ENCODE measurements at regions of chr6 and their contacts with region 1.

Region 1: DNA sequence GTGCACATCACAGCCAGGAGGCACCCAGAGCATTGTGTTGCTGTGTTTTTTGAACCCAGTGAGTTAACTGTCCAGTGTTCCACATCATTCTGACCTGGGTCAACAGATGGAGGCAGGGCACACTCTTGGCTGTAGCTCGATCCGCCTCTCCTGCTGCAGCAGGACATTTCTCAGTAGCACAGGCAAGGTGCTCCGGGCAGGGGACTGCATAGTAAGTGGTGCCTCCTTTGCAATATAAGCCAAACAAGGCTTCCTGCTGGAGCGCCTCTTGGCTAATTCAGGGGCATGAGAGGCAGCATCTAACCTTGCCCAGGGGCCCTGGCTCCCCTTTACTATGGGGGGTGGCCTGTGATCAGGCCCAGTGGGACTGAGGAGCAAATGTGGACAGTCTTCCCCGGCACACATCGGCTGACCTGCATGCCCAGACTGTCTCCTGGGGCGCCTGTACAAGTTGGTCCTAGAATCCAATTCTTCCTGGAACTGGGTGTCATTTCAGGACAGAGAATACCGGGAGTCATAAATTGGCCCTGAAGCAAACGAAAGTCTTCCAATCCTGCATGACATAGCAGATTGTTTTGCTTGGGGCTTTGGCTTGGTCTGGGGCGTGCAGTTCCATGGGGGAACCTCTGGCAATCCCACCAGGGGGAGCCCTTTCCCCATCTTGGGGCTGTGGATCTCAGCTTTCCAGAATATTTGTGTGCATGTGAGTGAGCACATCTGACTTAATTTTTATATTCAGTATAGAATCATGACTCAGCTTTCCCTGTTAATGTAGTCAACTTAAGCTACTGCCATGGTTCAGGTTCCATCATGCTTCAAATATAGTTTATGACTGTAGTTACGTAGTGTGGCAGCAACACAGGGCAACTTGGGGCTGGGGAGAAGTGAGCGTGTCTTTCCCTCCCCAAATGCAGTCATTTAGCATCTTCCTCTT is 56.0 kb upstream of the DDR1 start:
- DNase-seq: peak; percentile 90
- ATAC-seq: peak; percentile 98
- H3K4me3 ChIP-seq: no peak overlapping the region
- H3K27ac ChIP-seq: peak overlapping the region; percentile 58
- H3K4me1 ChIP-seq: peaks cover 16% of the 10 kb centered on the region
- H3K27me3 ChIP-seq: peaks cover 5% of the 10 kb centered on the region
- CTCF ChIP-seq: peak; percentile 99
- POLR2A ChIP-seq: peak; percentile 59
- RAD21 ChIP-seq: peak; percentile 99

Region 2: GRCh38 chr6:30678964-30679726 is 149.1 kb before region 1 on chr6:
- CTCF ChIA-PET with region 1: interaction called, 5 read pairs
- POLR2A ChIA-PET with region 1: no interaction called
- dilution Hi-C with region 1: no loop called
- in situ Hi-C with region 1: no loop called
- intact Hi-C with region 1: loop called (anchors 2 kb)
- DNase-seq: peak; percentile 73
- ATAC-seq: peak; percentile 36
- H3K4me3 ChIP-seq: no peak overlapping the region
- H3K27ac ChIP-seq: peak overlapping the region; percentile 49
- H3K4me1 ChIP-seq: peaks cover 14% of the 10 kb centered on the region
- H3K27me3 ChIP-seq: no peaks in the 10 kb centered on the region
- CTCF ChIP-seq: peak; percentile 93
- POLR2A ChIP-seq: no peak; the same call in 1 of the 2 replicates
- RAD21 ChIP-seq: peak; percentile 95

Region 3: GRCh38 chr6:30877419-30878371 is 49.4 kb after region 1 on chr6:
- CTCF ChIA-PET with region 1: interaction called, 7 read pairs
- POLR2A ChIA-PET with region 1: no interaction called
- dilution Hi-C with region 1: no loop called
- in situ Hi-C with region 1: no loop called
- intact Hi-C with region 1: loop called (anchors 1 kb)
- DNase-seq: peak; percentile 90
- ATAC-seq: peak; percentile 88
- H3K4me3 ChIP-seq: peak overlapping the region; percentile 23; the same call in 1 of the 2 replicates
- H3K27ac ChIP-seq: peak overlapping the region; percentile 77
- H3K4me1 ChIP-seq: peaks cover 14% of the 10 kb centered on the region
- H3K27me3 ChIP-seq: no peaks in the 10 kb centered on the region
- CTCF ChIP-seq: peak; percentile 97
- POLR2A ChIP-seq: no peak
- RAD21 ChIP-seq: peak; percentile 94

Region 4: DNA sequence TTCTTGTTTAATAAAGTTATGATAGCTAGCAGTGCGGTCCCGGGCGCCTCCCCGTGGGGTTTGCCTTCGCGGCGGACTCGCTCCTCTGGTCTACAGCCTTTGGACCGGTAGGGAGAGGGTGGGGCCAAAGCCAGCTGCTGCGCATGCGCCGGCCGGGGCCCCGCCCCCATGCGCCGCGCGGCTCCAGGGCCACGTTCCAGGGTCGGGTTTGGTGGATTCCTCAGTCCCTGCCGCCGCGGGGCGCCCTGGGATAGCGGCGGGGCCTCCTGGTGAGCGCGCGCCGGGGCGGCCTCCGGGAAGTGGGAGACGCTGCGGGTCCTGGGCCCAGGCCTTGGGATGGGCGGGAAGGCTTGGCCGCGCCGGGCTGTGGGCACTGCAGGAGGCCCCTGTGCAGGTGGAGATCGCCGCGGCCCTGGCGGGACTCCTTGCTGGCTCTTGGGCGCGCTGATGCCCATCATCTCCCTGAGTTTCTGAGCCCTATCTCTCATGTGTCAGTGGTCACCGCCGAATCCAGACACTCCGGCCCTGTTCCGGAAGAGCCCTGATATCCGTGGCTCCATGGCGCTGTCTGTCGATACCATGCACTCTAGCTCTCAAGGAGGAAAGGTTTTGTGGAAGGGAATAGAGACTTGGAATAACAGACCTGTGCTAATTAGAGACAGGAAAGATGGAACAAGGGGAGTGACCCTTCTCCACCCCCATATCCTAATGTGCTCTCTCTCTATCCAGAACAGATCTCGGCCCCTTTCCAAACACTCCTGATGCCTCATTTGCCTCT is 86.0 kb after region 1 on chr6 and contains the start of gene VARS2:
- CTCF ChIA-PET with region 1: interaction called, 3 read pairs
- POLR2A ChIA-PET with region 1: no interaction called
- dilution Hi-C with region 1: no loop called
- in situ Hi-C with region 1: no loop called
- intact Hi-C with region 1: loop called (anchors 1 kb)
- DNase-seq: peak; percentile 88
- ATAC-seq: peak; percentile 97
- H3K4me3 ChIP-seq: peak within 1 kb of the TSS; percentile 44
- H3K27ac ChIP-seq: peak within 1 kb of the TSS; percentile 82
- H3K4me1 ChIP-seq: peaks cover 12% of the 10 kb centered on the region
- H3K27me3 ChIP-seq: no peaks in the 10 kb centered on the region
- CTCF ChIP-seq: peak; percentile 54
- POLR2A ChIP-seq: peak; percentile 60; the same call in 1 of the 2 replicates
- RAD21 ChIP-seq: peak; percentile 50
- total RNA-seq, gene VARS2: 6.9 and 7.2 TPM in 2 replicates

Region 5: GRCh38 chr6:31079656-31080261 is 251.5 kb after region 1 on chr6:
- CTCF ChIA-PET with region 1: no interaction called
- POLR2A ChIA-PET with region 1: no interaction called
- dilution Hi-C with region 1: no loop called
- in situ Hi-C with region 1: loop called (anchors 5 kb)
- intact Hi-C with region 1: no loop called
- DNase-seq: peak; percentile 61
- ATAC-seq: peak; percentile 83
- H3K4me3 ChIP-seq: no peak overlapping the region
- H3K27ac ChIP-seq: no peak overlapping the region
- H3K4me1 ChIP-seq: peaks cover 8% of the 10 kb centered on the region
- H3K27me3 ChIP-seq: no peaks in the 10 kb centered on the region; the same call in 1 of the 2 replicates
- CTCF ChIP-seq: peak; percentile 87
- POLR2A ChIP-seq: no peak
- RAD21 ChIP-seq: peak; percentile 79